ENCODE measurements at regions of chr9 and their contacts with region 1.

Region 1: GRCh38 chr9:77751341-77752091 is 103.4 kb upstream of the GNA14 start:
- DNase-seq: no peak
- H3K4me3 ChIP-seq: peak overlapping the region in 1 of 4 donors; percentile 8
- H3K27ac ChIP-seq: peak overlapping the region; percentile 51 to 70 (median 58)
- H3K4me1 ChIP-seq: peaks cover 12 to 50% (median 43%) of the 10 kb centered on the region in 4 donors
- H3K27me3 ChIP-seq: no peaks in the 10 kb centered on the region
- CTCF ChIP-seq: peak; percentile 49 to 59 (median 58)
- EP300 ChIP-seq: no peak
- POLR2A ChIP-seq: no peak

Region 2: GRCh38 chr9:77456829-77457437 is 294.6 kb before region 1 on chr9:
- intact Hi-C with region 1: loop called (anchors 2 kb)
- DNase-seq: peak; percentile 94
- H3K4me3 ChIP-seq: no peak overlapping the region
- H3K27ac ChIP-seq: no peak overlapping the region
- H3K4me1 ChIP-seq: peaks cover 0 to 21% (median 9%) of the 10 kb centered on the region in 4 donors
- H3K27me3 ChIP-seq: no peaks in the 10 kb centered on the region
- CTCF ChIP-seq: peak; percentile 87 to 95 (median 88)
- EP300 ChIP-seq: no peak
- POLR2A ChIP-seq: no peak

Region 3: GRCh38 chr9:77588271-77588937 is 163.1 kb before region 1 on chr9:
- intact Hi-C with region 1: no loop called
- DNase-seq: peak; percentile 29
- H3K4me3 ChIP-seq: no peak overlapping the region
- H3K27ac ChIP-seq: no peak overlapping the region
- H3K4me1 ChIP-seq: peaks cover 0 to 12% (median 11%) of the 10 kb centered on the region in 4 donors
- H3K27me3 ChIP-seq: no peaks in the 10 kb centered on the region
- CTCF ChIP-seq: no peak
- EP300 ChIP-seq: no peak
- POLR2A ChIP-seq: no peak

Region 4: GRCh38 chr9:77598524-77598923 is 153.0 kb before region 1 on chr9:
- intact Hi-C with region 1: no loop called
- DNase-seq: no peak
- H3K4me3 ChIP-seq: no peak overlapping the region
- H3K27ac ChIP-seq: peak overlapping the region in 3 of 4 donors; percentile 24 to 70 (median 31)
- H3K4me1 ChIP-seq: peaks cover 31 to 58% (median 52%) of the 10 kb centered on the region in 4 donors
- H3K27me3 ChIP-seq: no peaks in the 10 kb centered on the region
- CTCF ChIP-seq: no peak
- EP300 ChIP-seq: peak; percentile 14
- POLR2A ChIP-seq: no peak